HepG2 (cell line): ENCODE measurements at regions of chr19 and their contacts with region 1.

Region 1: GRCh38 chr19:12139885-12140547 is at the start of gene ZNF20:
- DNase-seq: peak; percentile 90
- ATAC-seq: peak; percentile 96
- H3K4me3 ChIP-seq: peak within 1 kb of the TSS; percentile 85 to 96 (median 93)
- H3K27ac ChIP-seq: peak within 1 kb of the TSS; percentile 86
- H3K4me1 ChIP-seq: peaks cover 23% of the 10 kb centered on the region
- H3K27me3 ChIP-seq: no peaks in the 10 kb centered on the region; a peak in 1 of 5 replicates
- CTCF ChIP-seq: no peak; the same call in none of the 2 replicates
- EP300 ChIP-seq: no peak
- POLR2A ChIP-seq: peak; percentile 60 to 73; a peak in 3 of 4 replicates
- RAD21 ChIP-seq: no peak
- total RNA-seq, gene ZNF20: 8.0 and 9.7 TPM in 2 replicates

Region 2: DNA sequence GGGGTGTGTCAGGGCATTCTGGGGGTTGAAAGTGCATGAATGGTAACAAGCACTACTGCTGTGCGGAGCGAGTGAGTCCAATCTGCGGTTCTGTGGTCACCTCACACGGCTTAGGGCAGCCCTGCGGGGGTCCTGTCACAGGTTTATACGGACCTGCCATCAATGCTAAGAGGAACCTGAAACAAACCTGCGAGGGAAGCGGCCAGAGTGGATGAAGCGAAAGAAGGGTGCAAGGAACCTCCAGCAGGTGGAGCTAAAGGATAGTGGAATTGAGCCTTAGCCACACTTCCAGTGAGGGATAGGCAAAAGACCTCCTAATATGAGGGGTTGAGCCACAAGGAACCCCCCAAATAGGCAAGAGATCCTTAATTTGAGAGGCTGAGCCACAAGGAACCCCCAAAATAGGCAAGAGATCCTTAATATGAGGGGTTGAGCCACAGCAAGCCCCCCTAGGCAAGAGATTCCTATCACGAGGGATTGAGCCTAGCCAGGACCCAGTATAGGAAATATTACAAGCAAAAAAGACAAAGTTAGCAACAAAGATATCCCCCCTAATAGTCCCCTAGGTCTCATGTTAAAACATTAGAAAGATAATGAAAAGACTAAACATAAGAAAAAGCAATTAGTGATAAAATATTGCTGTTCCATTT is 258.7 kb before region 1 on chr19:
- CTCF ChIA-PET with region 1: interaction called, 13 read pairs
- POLR2A ChIA-PET with region 1: interaction called, 3 read pairs
- in situ Hi-C with region 1: loop called (anchors 5 kb)
- intact Hi-C with region 1: loop called (anchors 2 kb)
- DNase-seq: peak; percentile 49
- ATAC-seq: peak; percentile 81
- H3K4me3 ChIP-seq: no peak overlapping the region
- H3K27ac ChIP-seq: no peak overlapping the region
- H3K4me1 ChIP-seq: peaks cover 9% of the 10 kb centered on the region; the same call in 1 of the 2 replicates
- H3K27me3 ChIP-seq: no peaks in the 10 kb centered on the region
- CTCF ChIP-seq: peak; percentile 94
- EP300 ChIP-seq: no peak
- POLR2A ChIP-seq: no peak
- RAD21 ChIP-seq: peak; percentile 87

Region 3: GRCh38 chr19:11964858-11965645 is 175.0 kb before region 1 on chr19 and contains the start of gene ZNF763:
- CTCF ChIA-PET with region 1: interaction called, 9 read pairs
- POLR2A ChIA-PET with region 1: no interaction called
- in situ Hi-C with region 1: no loop called
- intact Hi-C with region 1: loop called (anchors 2 kb)
- DNase-seq: peak; percentile 60
- ATAC-seq: peak; percentile 88
- H3K4me3 ChIP-seq: peak within 1 kb of the TSS in 2 of 3 experiments; percentile 31 to 42; a peak in 3 of 6 replicates
- H3K27ac ChIP-seq: no peak within 1 kb of the TSS
- H3K4me1 ChIP-seq: peaks cover 18% of the 10 kb centered on the region
- H3K27me3 ChIP-seq: no peaks in the 10 kb centered on the region
- CTCF ChIP-seq: no peak
- EP300 ChIP-seq: no peak
- POLR2A ChIP-seq: no peak
- RAD21 ChIP-seq: no peak
- total RNA-seq, gene ZNF763: 0.42 and 0.49 TPM in 2 replicates

Region 4: DNA sequence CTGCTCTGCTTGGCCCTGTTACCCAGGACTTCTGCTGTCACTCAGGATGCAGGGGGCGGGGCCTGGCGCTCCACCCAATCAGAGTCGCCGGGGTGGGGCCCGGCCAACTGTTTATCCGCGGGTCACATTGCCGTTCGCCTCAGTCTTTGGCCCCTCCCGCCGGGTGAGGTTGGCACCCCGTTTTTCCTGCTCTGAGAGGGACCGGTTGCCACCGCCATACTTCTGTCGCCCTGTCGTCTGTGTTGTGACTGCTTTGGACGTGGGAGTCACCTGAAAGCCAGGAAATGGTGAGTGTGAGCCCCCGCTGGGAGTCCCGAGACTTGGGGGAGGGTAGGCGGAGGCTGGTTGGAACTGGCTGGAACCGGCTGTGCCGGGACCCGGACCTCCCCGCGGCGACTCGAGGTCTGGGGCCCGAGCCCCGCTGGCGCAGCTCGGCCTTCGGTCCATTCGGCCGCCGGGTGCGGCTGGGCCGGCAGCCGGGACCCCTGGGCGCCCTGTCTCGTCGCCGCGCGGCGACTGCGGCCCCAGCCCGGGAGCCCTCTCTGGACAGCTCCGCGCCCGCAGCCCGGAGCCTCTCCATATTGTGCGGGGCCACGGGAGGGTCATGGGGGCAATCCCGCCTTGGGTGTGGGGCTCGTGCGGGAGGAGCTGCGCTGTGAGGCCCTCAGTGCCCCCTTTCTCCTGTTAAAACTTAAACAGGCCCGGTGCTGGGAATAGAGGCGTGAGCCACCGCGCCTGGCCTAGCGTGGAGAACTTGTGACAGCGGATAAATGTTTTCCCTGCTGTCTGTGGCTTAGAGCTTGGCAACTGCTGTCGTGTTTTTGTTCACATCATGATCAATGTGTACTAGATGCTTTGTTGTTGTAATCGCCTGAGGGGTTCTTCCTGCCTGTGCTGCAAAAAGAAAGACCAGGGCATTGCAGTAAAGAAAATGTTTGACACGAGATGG is 75.2 kb before region 1 on chr19 and contains the start of gene ZNF844:
- CTCF ChIA-PET with region 1: interaction called, 58 read pairs
- POLR2A ChIA-PET with region 1: interaction called, 24 read pairs
- in situ Hi-C with region 1: no loop called
- intact Hi-C with region 1: no loop called
- DNase-seq: peak; percentile 82
- ATAC-seq: peak; percentile 83
- H3K4me3 ChIP-seq: peak within 1 kb of the TSS; percentile 59 to 71 (median 67); a peak in 5 of 6 replicates
- H3K27ac ChIP-seq: peak within 1 kb of the TSS; percentile 65
- H3K4me1 ChIP-seq: peaks cover 28% of the 10 kb centered on the region
- H3K27me3 ChIP-seq: no peaks in the 10 kb centered on the region; a peak in 1 of 5 replicates
- CTCF ChIP-seq: no peak
- EP300 ChIP-seq: no peak
- POLR2A ChIP-seq: peak; percentile 83 to 91
- RAD21 ChIP-seq: no peak
- total RNA-seq, gene ZNF844: 3.2 and 6.0 TPM in 2 replicates

Region 5: GRCh38 chr19:12156223-12157058 is 16.4 kb after region 1 on chr19 and contains the start of gene ZNF625:
- CTCF ChIA-PET with region 1: no interaction called
- POLR2A ChIA-PET with region 1: interaction called, 11 read pairs
- in situ Hi-C with region 1: no loop called
- intact Hi-C with region 1: no loop called
- DNase-seq: peak; percentile 90
- ATAC-seq: peak; percentile 98
- H3K4me3 ChIP-seq: peak within 1 kb of the TSS; percentile 86 to 98 (median 87)
- H3K27ac ChIP-seq: peak within 1 kb of the TSS; percentile 80
- H3K4me1 ChIP-seq: peaks cover 28% of the 10 kb centered on the region
- H3K27me3 ChIP-seq: no peaks in the 10 kb centered on the region
- CTCF ChIP-seq: 0 out of 2 replicates have a peak, but pooled peaks have one; percentile 5
- EP300 ChIP-seq: no peak
- POLR2A ChIP-seq: peak; percentile 86 to 89
- RAD21 ChIP-seq: no peak
- total RNA-seq, gene ZNF625: 12.2 and 17.7 TPM in 2 replicates